Transverse colon (tissue), 4 donors: ENCODE measurements at regions of chr7 and their contacts with region 1.

Region 1: DNA sequence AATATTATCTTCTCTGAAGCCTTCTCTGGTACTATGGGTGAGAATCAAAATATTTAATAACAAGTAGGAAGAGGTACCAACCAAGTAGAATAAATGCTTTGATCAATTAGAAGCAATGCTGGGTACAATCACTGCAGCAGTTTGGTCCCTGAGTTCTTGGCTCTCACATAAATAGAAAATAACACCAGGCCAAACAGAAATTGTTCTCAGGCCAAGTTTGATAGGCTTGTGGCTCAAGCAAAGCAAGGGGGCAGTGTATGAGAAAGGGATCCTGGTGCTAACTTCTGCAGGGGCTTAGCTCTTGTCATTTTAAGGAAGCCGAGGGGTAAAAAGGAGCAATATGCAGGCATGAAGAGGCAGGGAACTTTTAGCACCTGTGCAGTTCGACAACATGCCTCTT is 146.8 kb upstream of the TMEM229A start:
- DNase-seq: no peak
- H3K4me3 ChIP-seq: no peak overlapping the region
- H3K27ac ChIP-seq: no peak overlapping the region
- H3K4me1 ChIP-seq: no peaks in the 10 kb centered on the region
- H3K27me3 ChIP-seq: no peaks in the 10 kb centered on the region
- CTCF ChIP-seq: no peak
- EP300 ChIP-seq: no peak
- POLR2A ChIP-seq: no peak

Region 2: GRCh38 chr7:125336326-125336725 is 1156.7 kb after region 1 on chr7:
- in situ Hi-C with region 1: no loop called
- intact Hi-C with region 1: loop called (anchors 5 kb)
- DNase-seq: no peak
- H3K4me3 ChIP-seq: no peak overlapping the region
- H3K27ac ChIP-seq: no peak overlapping the region
- H3K4me1 ChIP-seq: no peaks in the 10 kb centered on the region
- H3K27me3 ChIP-seq: no peaks in the 10 kb centered on the region
- CTCF ChIP-seq: no peak
- EP300 ChIP-seq: no peak
- POLR2A ChIP-seq: no peak